GM10248 (cell line): ENCODE measurements at regions of chr15 and their contacts with region 1.

Region 1: GRCh38 chr15:35477312-35478262 is 68.4 kb downstream of the DPH6 start:
- DNase-seq: no peak
- CTCF ChIP-seq: no peak

Region 2: DNA sequence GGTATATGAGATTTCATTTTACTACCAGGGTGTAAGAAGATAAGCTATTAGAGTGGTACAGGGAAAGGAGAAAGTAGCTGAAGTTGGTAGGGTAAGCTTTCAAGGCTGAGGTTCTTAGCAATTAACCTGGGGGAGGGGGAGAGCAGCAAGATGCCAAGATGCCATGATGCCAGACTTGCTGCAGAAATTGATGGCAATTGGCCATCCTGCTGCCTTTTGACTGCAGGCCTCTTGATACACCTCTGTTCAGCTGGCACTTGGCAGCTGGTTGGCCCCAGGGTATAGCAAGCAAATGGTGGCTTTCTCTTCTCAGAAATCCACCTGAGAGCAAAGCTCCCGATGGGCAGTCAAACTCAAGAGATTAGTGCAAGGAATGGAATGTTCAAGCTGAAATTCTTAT is 89.8 kb after region 1 on chr15:
- CTCF ChIA-PET with region 1: no interaction called
- POLR2A ChIA-PET with region 1: no interaction called
- DNase-seq: no peak
- CTCF ChIP-seq: no peak

Region 3: GRCh38 chr15:35874260-35874905 is 396.8 kb after region 1 on chr15:
- CTCF ChIA-PET with region 1: no interaction called
- POLR2A ChIA-PET with region 1: interaction called, 10 read pairs
- DNase-seq: no peak
- CTCF ChIP-seq: no peak